Activated naive CD4-positive, alpha-beta T cell treated with anti-CD3 and anti-CD28 coated beads for 36 hours (primary cell): ENCODE measurements at regions of chr12 and their contacts with region 1.

Region 1: DNA sequence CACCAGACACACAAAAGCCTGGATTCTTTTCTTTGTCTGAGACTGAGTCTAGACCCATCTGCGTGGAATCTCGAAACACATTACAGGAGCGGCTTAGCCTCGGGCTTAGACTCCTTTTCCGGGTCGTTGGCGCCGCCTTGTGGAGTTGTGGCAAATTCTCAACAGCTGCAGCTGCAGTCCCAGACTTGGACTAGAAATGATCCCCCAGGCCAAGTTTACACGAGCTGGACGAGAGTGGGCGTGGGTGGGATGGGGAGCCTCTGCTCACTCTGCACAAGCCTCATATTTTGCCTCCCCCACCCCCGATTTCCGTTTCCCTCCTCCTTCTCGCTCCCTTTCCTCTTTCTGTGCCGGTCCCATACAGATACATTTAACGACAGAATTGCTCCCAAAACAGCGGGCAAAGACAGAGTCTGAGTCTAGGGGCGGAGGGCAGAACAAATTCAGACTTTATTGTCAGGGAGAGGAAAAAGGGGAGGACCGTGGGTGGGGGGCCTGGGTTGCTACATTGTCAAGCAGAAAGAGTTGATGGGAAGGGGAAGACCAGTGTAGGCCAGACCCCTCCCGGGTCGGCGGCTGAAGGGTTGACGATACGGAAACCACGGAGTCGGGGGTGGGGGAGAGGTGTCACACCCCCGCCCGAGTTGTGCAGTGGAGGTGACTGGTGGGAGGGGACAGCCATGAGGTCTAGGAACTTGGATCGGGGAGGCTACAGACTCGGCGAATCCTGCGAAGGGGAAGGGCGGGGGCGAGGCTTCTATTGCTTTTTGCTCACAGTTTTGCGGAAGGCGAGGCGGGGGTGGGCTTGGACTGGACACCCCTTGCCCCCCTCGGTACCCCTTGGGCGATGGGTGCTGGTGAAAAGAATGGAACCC is 4.7 kb upstream of the GPR84 start:
- DNase-seq: peak; percentile 97
- H3K4me3 Mint-ChIP-seq: peak overlapping the region; percentile 23
- H3K27ac Mint-ChIP-seq: no peak overlapping the region
- H3K4me1 Mint-ChIP-seq: peaks cover 41% of the 10 kb centered on the region
- H3K27me3 Mint-ChIP-seq: no peaks in the 10 kb centered on the region

Region 2: DNA sequence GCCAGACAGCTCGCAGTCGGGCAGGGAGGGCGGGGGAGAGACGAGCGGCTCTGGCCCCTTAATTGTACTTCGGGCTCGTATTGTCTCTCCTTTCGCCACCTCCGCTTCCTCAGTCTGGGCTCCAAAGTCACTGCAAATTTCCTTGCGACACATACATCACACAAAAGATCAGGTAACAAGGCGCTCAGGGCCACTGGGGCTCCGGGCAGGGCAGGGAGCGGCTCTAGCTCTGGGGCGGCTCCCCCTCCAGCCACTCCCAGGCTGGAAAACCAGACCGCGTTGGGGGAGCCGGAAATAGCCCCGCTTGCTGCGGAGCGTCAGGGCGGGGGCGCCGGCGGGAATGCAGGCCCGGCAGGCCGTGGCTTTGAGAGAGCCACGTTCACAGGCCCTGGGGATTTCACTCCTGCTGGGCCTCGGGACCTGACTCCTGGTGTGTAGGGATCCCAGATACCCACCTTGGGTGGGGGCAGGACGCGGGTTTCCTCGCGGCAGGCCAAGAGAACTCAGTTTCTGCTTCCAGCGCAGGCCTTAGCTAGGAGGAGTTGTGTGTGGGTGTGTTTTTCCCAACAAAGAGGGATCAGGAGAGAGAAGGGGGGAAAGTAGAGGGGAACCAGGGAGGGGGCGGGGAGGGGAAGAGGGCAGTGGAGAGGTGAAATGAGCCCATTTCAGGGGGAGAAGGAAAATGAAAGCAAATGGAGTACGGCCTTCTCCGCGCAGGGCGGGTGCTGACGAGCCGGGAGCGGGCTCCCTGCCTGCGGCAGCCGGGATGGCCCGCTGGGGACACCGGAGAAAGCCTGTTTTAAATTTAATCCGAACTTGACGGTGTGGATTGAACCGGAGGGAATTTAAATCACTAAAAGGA is 373.3 kb before region 1 on chr12:
- CTCF ChIA-PET with region 1: no interaction called
- intact Hi-C with region 1: no loop called
- DNase-seq: peak; percentile 36
- H3K4me3 Mint-ChIP-seq: peak overlapping the region; percentile 74
- H3K27ac Mint-ChIP-seq: no peak overlapping the region
- H3K4me1 Mint-ChIP-seq: peaks cover 36% of the 10 kb centered on the region
- H3K27me3 Mint-ChIP-seq: peaks cover 79% of the 10 kb centered on the region

Region 3: DNA sequence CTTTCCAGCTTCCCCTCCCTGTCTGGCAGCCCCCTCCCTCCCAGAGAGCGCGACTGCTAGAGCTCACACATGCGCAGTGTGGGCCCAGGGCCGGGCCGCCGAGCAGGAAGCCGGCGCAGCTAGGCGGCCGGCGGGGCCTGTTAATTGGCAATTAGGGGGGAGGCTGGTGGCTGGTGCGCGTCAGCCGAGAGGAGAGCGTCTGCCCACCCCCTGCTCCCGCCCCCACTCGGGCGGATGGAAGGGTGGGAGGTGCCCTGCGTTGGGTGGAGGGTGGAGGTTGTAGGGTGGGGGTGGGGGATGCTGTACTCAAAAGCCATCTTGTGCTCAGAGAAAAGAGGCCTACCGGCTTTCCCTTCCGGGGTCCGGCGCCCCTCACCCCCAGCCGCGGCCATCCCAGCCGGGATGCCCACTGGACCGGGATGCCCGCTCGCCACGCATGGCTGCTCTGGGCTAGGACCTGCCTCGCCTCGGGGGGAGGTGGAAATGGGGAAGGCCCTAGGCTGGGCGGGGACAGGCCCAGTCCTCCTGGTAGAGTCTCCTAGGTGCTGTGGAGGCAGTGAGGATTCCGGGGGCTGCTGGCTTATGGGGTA is 351.0 kb before region 1 on chr12:
- CTCF ChIA-PET with region 1: no interaction called
- intact Hi-C with region 1: loop called (anchors 5 kb)
- DNase-seq: peak; percentile 79
- H3K4me3 Mint-ChIP-seq: peak overlapping the region; percentile 76
- H3K27ac Mint-ChIP-seq: no peak overlapping the region
- H3K4me1 Mint-ChIP-seq: peaks cover 26% of the 10 kb centered on the region
- H3K27me3 Mint-ChIP-seq: peaks cover 78% of the 10 kb centered on the region

Region 4: GRCh38 chr12:54207484-54208294 is 161.3 kb before region 1 on chr12:
- CTCF ChIA-PET with region 1: interaction called, 12 read pairs
- intact Hi-C with region 1: no loop called
- DNase-seq: peak; percentile 88
- H3K4me3 Mint-ChIP-seq: no peak overlapping the region
- H3K27ac Mint-ChIP-seq: no peak overlapping the region
- H3K4me1 Mint-ChIP-seq: no peaks in the 10 kb centered on the region
- H3K27me3 Mint-ChIP-seq: peaks cover 9% of the 10 kb centered on the region

Region 5: GRCh38 chr12:54220092-54220557 is 148.8 kb before region 1 on chr12:
- CTCF ChIA-PET with region 1: interaction called, 16 read pairs
- intact Hi-C with region 1: loop called (anchors 1 kb)
- DNase-seq: peak; percentile 84
- H3K4me3 Mint-ChIP-seq: no peak overlapping the region
- H3K27ac Mint-ChIP-seq: no peak overlapping the region
- H3K4me1 Mint-ChIP-seq: peaks cover 19% of the 10 kb centered on the region
- H3K27me3 Mint-ChIP-seq: peaks cover 4% of the 10 kb centered on the region

Region 6: GRCh38 chr12:54294152-54294952 is 74.6 kb before region 1 on chr12:
- CTCF ChIA-PET with region 1: interaction called, 117 read pairs
- intact Hi-C with region 1: loop called (anchors 1 kb)
- DNase-seq: peak; percentile 82
- H3K4me3 Mint-ChIP-seq: no peak overlapping the region
- H3K27ac Mint-ChIP-seq: no peak overlapping the region
- H3K4me1 Mint-ChIP-seq: no peaks in the 10 kb centered on the region
- H3K27me3 Mint-ChIP-seq: peaks cover 7% of the 10 kb centered on the region

Region 7: GRCh38 chr12:54337280-54337842 is 31.6 kb before region 1 on chr12:
- CTCF ChIA-PET with region 1: interaction called, 31 read pairs
- intact Hi-C with region 1: loop called (anchors 1 kb)
- DNase-seq: no peak
- H3K4me3 Mint-ChIP-seq: no peak overlapping the region
- H3K27ac Mint-ChIP-seq: no peak overlapping the region
- H3K4me1 Mint-ChIP-seq: peaks cover 22% of the 10 kb centered on the region
- H3K27me3 Mint-ChIP-seq: no peaks in the 10 kb centered on the region

Region 8: DNA sequence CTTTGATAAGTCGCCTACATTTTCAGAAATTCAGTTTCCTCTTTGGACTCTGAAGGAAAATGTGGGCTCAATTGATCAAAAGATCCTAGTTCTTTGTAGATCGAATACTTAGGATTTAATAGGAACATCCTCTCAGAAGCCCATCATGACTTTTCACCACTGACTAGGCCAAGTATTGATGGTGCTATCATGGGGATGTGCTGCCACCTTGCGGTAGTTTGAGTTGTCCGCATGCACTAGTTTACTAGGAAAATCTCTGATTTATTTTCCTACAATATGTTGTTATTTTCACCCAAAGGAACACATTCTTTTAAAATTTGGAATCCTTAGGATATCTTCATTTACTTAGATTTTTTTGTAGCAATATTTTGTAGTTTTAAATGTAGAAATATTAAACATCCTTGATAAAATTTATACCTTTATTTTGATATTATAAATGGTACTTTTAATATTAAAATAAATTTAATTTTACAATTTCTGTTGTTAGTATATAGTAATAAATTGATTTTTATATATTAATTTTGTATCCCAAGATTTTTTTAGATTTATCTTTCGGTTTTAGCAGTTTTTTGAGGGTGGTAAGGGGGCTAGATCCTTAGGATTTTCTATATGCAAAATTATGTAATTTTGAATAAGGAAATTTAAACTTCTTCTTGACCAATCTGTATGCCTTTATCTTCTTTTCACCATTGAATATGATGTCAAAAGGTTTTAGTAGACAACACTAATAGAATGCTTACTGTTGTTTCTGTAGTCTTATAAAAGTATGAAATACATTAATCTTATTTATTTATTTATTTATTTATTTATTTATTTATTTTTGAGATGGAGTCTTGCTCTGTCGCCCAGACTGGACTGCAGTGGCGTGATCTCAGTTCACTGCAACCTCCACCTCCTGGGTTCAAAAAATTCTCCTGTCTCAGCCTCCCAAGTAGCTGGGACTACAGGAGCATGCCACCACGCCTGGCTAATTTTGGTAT is 704.4 kb after region 1 on chr12:
- CTCF ChIA-PET with region 1: no interaction called
- intact Hi-C with region 1: no loop called
- DNase-seq: peak; percentile 90
- H3K4me3 Mint-ChIP-seq: no peak overlapping the region
- H3K27ac Mint-ChIP-seq: no peak overlapping the region
- H3K4me1 Mint-ChIP-seq: peaks cover 3% of the 10 kb centered on the region
- H3K27me3 Mint-ChIP-seq: peaks cover 21% of the 10 kb centered on the region